ENCODE measurements at regions of chr1 and their contacts with region 1.

Region 1: DNA sequence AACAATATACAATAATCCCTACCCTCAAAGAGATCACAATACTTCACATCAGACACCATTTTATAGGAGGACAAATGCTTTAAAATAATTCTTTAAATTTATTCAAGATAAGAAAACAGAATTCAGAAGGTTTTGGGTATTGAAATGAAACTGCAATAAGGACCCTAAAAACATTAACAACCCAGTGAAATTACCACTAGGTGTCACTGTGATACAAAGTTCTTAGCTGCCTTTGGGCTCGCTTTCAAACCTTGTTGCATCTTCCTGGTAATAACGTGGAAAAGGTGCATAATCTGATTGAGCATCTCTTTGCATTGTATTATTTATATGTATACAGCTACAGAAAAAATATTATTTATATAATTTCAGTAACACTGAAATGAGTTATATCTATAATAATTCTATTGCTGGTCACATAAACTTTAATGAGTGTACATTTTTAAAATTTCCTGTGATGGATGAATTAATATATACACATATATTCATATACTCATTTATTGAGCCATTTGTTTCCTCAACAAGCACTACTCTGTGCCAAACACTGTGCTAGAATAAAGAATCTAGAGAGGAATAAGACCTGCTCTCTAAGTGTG is 185.2 kb downstream of the FAF1 start:
- DNase-seq: no peak

Region 2: GRCh38 chr1:50959913-50960844 is 185.3 kb after region 1 on chr1 and contains the start of gene FAF1:
- intact Hi-C with region 1: loop called (anchors 10 kb)
- DNase-seq: peak; percentile 99
- total RNA-seq, gene FAF1: 81.0 TPM

Region 3: GRCh38 chr1:51044834-51045233 is 270.0 kb after region 1 on chr1:
- intact Hi-C with region 1: loop called (anchors 2 kb)
- DNase-seq: no peak

Region 4: GRCh38 chr1:51192213-51192843 is 417.5 kb after region 1 on chr1:
- intact Hi-C with region 1: loop called (anchors 2 kb)
- DNase-seq: no peak